Activated CD8-positive, alpha-beta T cell treated with anti-CD3 and anti-CD28 coated beads for 36 hours (primary cell): ENCODE measurements at regions of chr11 and their contacts with region 1.

Region 1: GRCh38 chr11:94958121-94958696 is 15.1 kb downstream of the CWC15 start:
- DNase-seq: no peak
- ATAC-seq: no peak
- H3K4me3 Mint-ChIP-seq: no peak overlapping the region
- H3K27ac Mint-ChIP-seq: no peak overlapping the region
- H3K4me1 Mint-ChIP-seq: no peaks in the 10 kb centered on the region
- H3K27me3 Mint-ChIP-seq: no peaks in the 10 kb centered on the region
- CTCF ChIP-seq: no peak

Region 2: GRCh38 chr11:94973099-94973968 is 15.1 kb after region 1 on chr11 and contains the starts of genes CWC15 and KDM4D:
- CTCF ChIA-PET with region 1: interaction called, 4 read pairs
- POLR2A ChIA-PET with region 1: interaction called, 12 read pairs
- intact Hi-C with region 1: no loop called
- DNase-seq: peak; percentile 97
- ATAC-seq: peak; percentile 99
- H3K4me3 Mint-ChIP-seq: peak within 1 kb of the TSS; percentile 87
- H3K27ac Mint-ChIP-seq: peak within 1 kb of the TSS; percentile 97
- H3K4me1 Mint-ChIP-seq: peaks cover 29% of the 10 kb centered on the region
- H3K27me3 Mint-ChIP-seq: no peaks in the 10 kb centered on the region
- CTCF ChIP-seq: no peak
- total RNA-seq, gene CWC15: 72.5 to 76.4 TPM
- total RNA-seq, gene KDM4D: 1.1 to 1.6 TPM